Naive thymus-derived CD4-positive, alpha-beta T cell (primary cell): ENCODE measurements at regions of chr11 and their contacts with region 1.

Region 1: DNA sequence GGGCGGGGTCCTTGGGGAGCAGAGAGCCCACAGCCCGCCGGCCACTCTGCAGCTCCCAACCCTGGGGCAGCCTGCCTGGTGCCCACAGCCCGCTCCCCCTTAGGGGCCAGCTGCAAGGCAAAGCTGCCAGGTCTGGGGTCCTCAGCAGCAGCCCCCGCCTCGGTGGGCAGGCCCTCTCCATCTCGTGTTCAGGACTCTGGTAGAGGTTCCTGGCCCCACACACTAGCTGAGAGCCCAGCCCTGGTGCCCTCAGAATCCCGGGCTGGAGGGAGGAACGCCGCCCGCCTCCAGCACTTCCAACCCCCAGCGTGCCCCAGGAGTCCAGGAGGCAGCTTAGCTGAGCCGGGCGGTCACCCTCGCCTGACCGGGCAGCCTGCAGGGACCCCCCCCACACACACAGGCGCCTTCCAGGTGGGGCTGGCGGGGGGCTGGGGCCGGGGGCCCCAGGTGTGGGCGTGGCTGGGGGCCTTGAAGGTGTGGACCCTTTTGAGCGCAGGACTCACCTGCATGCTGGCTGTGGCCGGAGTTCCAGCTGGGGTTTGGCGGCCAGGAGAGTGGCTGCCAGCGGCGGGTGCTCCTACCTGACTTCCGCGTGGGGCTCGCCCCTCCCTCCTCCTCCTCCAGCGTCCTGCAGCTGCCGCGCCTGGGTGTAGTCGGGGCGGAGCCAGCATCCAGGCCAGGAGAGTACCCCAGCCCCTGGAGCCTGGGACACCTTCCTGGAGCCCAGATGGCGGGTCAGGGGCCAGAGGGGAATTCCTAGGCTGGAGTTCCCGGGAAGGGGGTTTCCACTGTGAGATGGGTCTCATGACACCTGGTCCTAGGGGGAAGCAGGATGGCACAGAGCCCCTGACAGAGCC is at the start of gene ANO9:
- DNase-seq: peak in 8 of 9 donors; percentile 34 to 66 (median 54)
- ATAC-seq: peak; percentile 82
- H3K4me3 ChIP-seq: peak within 1 kb of the TSS; percentile 73
- H3K4me3 Mint-ChIP-seq: peak within 1 kb of the TSS; percentile 63 to 87 (median 75)
- H3K27ac ChIP-seq: peak within 1 kb of the TSS; percentile 86
- H3K27ac Mint-ChIP-seq: peak within 1 kb of the TSS in 5 of 9 donors; percentile 14 to 55 (median 42)
- H3K4me1 ChIP-seq: peaks cover 7 to 25% of the 10 kb centered on the region in 2 donors
- H3K4me1 Mint-ChIP-seq: peaks cover 12 to 37% (median 26%) of the 10 kb centered on the region in 7 donors
- H3K27me3 ChIP-seq: no peaks in the 10 kb centered on the region
- H3K27me3 Mint-ChIP-seq: peaks cover 0 to 5% (median 0%) of the 10 kb centered on the region in 5 donors
- total RNA-seq, gene ANO9: 85.2 to 107 (median 94.0) TPM

Region 2: DNA sequence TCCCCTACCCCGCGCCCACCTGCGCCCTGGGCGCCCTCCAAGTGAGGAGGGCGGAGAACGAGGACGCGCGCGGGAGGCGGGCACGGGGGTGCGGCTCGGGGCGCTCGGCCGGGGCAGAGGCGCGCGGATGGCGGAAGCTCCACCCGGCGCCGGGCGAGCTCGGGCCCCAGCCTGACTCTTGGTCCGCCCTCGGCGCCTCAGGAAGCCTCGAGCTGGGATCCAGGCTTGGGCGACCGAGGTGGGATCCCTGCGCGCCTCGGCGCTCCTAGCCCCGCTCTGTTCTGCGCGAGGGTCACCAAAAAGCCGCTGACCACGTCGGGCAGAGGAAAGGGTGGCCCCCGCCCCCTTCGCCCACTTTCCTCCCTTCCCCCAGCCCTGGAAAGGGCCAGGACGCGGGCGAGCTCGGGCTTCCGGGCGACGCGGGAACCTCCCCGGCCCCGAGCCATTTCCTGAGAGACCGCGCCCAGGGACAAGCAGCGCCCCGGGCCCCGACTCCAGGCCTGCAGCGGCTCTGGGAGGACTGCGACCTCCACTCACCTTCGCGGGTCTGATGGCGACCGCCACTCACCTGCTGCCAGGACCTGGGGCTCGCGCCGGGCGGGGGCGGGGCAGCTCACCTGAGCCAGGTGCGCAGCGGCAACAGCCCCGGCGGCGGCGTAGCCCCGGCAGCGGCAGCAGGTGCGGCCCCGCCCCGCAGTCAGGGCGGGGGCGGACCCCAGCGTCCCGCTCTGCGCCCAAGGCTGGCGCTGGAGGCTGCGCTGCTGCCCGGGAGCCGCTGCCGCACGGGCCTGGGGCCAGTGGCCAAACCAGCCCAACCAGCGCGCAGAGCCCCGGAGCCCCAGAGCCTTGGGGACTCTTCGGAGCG is 24.7 kb before region 1 on chr11:
- CTCF ChIA-PET with region 1: interaction called, 7 read pairs
- POLR2A ChIA-PET with region 1: interaction called, 10 read pairs
- intact Hi-C with region 1: no loop called
- DNase-seq: peak; percentile 34 to 71 (median 47)
- ATAC-seq: peak; percentile 38
- H3K4me3 ChIP-seq: peak overlapping the region; percentile 92
- H3K4me3 Mint-ChIP-seq: peak overlapping the region; percentile 48 to 100 (median 96)
- H3K27ac ChIP-seq: peak overlapping the region; percentile 75
- H3K27ac Mint-ChIP-seq: peak overlapping the region in 4 of 9 donors; percentile 68 to 78 (median 70)
- H3K4me1 ChIP-seq: peaks cover 11 to 21% of the 10 kb centered on the region in 2 donors
- H3K4me1 Mint-ChIP-seq: peaks cover 10 to 37% (median 17%) of the 10 kb centered on the region in 7 donors
- H3K27me3 ChIP-seq: no peaks in the 10 kb centered on the region
- H3K27me3 Mint-ChIP-seq: no peaks in the 10 kb centered on the region

Region 3: DNA sequence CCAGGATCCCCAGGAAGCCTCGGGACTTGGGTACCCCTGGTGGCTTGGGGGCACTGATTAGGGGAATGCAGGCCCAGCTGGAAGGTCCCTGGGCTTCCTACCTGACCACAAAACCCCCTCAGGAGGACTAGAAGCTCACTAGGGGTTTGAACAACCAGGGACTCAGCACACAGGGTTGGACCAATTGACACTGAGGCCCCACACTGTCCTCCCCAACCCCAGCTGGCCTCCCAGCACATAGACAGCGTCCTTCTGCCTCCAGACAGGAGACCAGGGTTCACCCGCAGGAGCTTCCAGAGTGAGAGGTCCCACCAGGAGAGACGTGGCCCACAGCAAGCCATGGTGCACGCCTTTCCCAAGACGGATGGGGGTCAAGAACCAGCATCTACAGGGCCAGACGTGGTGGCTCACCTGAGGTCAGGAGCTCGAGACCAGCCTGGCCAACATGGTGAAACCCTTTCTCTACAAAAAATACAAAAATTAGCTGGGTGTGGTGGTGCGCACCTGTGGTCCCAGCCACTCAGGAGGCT is 14.9 kb before region 1 on chr11:
- CTCF ChIA-PET with region 1: no interaction called
- POLR2A ChIA-PET with region 1: interaction called, 4 read pairs
- intact Hi-C with region 1: loop called in 1 of 2 experiments (anchors 1 kb)
- DNase-seq: peak in 1 of 9 donors; percentile 4
- ATAC-seq: no peak
- H3K4me3 ChIP-seq: no peak overlapping the region
- H3K4me3 Mint-ChIP-seq: no peak overlapping the region
- H3K27ac ChIP-seq: no peak overlapping the region
- H3K27ac Mint-ChIP-seq: no peak overlapping the region
- H3K4me1 ChIP-seq: no peaks in the 10 kb centered on the region
- H3K4me1 Mint-ChIP-seq: peaks cover 0 to 6% (median 0%) of the 10 kb centered on the region in 7 donors
- H3K27me3 ChIP-seq: no peaks in the 10 kb centered on the region
- H3K27me3 Mint-ChIP-seq: no peaks in the 10 kb centered on the region